K562 (cell line): ENCODE measurements at regions of chr1 and their contacts with region 1.

Region 1: GRCh38 chr1:167936068-167936929 is at the start of gene DCAF6:
- DNase-seq: peak; percentile 98 to 99 (median 98)
- ATAC-seq: peak; percentile 76
- H3K4me3 ChIP-seq: peak within 1 kb of the TSS; percentile 81
- H3K27ac ChIP-seq: peak within 1 kb of the TSS; percentile 98
- H3K4me1 ChIP-seq: peaks cover 8 to 15% of the 10 kb centered on the region in 2 experiments; a peak in 4 of 5 replicates
- H3K27me3 ChIP-seq: no peaks in the 10 kb centered on the region
- CTCF ChIP-seq: no peak; a peak in 1 of 6 replicates
- EP300 ChIP-seq: peak; percentile 27
- POLR2A ChIP-seq: peak; percentile 89
- RAD21 ChIP-seq: no peak
- polyA plus RNA-seq, gene DCAF6: 19.1 to 24.5 TPM

Region 2: GRCh38 chr1:167553136-167554027 is 382.9 kb before region 1 on chr1 and contains the start of gene CREG1:
- CTCF ChIA-PET with region 1: no interaction called
- POLR2A ChIA-PET with region 1: interaction called, 3 read pairs
- in situ Hi-C with region 1: no loop called
- intact Hi-C with region 1: loop called (anchors 5 kb)
- DNase-seq: peak; percentile 98 to 99 (median 98)
- ATAC-seq: peak; percentile 93
- H3K4me3 ChIP-seq: peak within 1 kb of the TSS; percentile 73
- H3K27ac ChIP-seq: peak within 1 kb of the TSS; percentile 70
- H3K4me1 ChIP-seq: peaks cover 23 to 45% of the 10 kb centered on the region in 2 experiments
- H3K27me3 ChIP-seq: no peaks in the 10 kb centered on the region
- CTCF ChIP-seq: peak in 2 of 3 experiments; percentile 24 to 41; a peak in 2 of 6 replicates
- EP300 ChIP-seq: 0 out of 2 replicates have a peak, but pooled peaks have one; percentile 9
- POLR2A ChIP-seq: peak; percentile 82
- RAD21 ChIP-seq: peak in 1 of 2 experiments; percentile 12; a peak in 1 of 4 replicates
- polyA plus RNA-seq, gene CREG1: 45.7 to 58.2 TPM

Region 3: DNA sequence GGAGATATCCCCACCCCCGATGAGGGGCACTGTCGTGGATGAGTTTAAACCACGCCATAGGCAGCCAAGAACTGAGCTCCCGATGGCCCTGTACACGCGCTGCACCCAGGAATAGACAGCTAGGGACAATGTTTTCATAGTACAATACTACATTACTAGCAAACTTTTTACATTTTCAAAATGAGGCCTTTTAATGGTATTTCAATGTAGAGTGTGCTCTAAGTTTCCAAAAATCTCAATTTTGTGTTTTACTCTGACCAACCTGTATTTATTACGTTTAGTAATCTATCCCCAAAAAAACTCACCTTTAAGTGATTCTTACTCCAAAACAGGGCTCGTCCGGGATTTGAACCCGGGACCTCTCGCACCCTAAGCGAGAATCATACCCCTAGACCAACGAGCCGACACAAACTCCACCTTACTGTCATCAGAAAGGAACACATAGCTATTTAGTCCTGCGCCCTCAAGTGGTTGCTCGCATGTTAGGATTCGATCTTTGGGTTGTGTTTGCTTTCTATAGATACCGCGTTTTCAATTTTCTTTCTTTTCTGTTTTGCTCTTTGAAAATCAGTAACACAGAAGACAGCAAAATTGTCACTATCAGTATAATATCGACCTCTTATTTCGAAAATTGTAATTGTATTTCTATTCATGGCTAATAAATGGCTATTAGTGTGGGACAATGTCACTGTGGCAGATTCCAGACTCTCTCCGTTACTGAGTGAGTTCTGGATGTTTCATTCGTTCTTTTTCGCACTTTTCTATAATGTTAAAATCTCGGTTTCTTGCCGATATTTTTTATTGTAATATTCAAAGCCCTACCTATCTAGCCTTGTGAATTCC is 220.9 kb before region 1 on chr1:
- CTCF ChIA-PET with region 1: no interaction called
- POLR2A ChIA-PET with region 1: interaction called, 19 read pairs
- in situ Hi-C with region 1: no loop called
- intact Hi-C with region 1: loop called (anchors 2 kb)
- DNase-seq: peak; percentile 75 to 94 (median 78)
- ATAC-seq: peak; percentile 65
- H3K4me3 ChIP-seq: peak overlapping the region; percentile 66
- H3K27ac ChIP-seq: peak overlapping the region; percentile 99
- H3K4me1 ChIP-seq: peaks cover 21 to 22% of the 10 kb centered on the region in 2 experiments
- H3K27me3 ChIP-seq: no peaks in the 10 kb centered on the region
- CTCF ChIP-seq: peak; percentile 87 to 98 (median 97)
- EP300 ChIP-seq: peak; percentile 86
- POLR2A ChIP-seq: no peak
- RAD21 ChIP-seq: peak; percentile 48 to 60

Region 4: DNA sequence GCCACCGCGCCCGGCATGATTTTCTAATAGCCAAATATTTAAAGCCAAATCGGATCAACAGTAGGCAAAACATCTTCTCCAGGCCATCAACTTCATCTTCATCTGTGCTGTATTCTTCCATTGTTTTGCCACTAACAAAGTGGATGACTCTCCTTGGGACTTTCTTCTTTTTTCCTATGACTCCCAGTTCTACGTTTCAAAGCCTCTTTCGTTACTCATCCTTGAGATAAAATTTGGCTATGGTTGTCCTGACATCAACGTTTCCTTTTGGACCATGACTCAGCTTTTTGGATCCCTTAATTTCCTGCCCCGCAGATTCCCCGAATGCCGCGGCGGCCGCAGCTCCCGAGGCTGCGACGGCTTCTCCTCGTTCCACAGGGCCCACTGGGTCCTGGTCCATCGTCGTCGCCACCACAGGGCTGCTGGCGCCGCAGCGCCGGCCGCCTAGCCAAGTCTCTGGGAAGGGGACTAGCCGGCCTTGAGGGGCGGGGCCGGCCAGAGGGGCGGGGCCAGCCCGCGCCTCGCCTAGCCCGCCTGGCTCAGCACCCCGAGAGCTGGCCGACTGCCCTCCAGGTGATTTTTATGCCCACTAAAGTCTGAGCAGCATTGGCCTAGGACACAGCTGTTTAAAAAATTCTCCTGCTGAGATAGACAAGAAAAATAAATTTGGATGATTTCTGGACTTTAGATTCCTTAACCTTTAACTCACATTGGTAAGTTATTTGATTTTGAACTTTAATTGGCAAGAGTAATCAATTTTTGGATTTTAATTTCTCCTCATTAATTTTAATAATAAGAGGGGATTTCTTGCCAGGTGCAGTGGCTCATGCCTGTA is 116.2 kb before region 1 on chr1:
- CTCF ChIA-PET with region 1: no interaction called
- POLR2A ChIA-PET with region 1: no interaction called
- in situ Hi-C with region 1: no loop called
- intact Hi-C with region 1: loop called (anchors 5 kb)
- DNase-seq: peak; percentile 90 to 94 (median 92)
- ATAC-seq: peak; percentile 94
- H3K4me3 ChIP-seq: peak overlapping the region; percentile 38
- H3K27ac ChIP-seq: peak overlapping the region; percentile 71
- H3K4me1 ChIP-seq: peaks cover 22 to 41% of the 10 kb centered on the region in 2 experiments
- H3K27me3 ChIP-seq: no peaks in the 10 kb centered on the region
- CTCF ChIP-seq: no peak
- EP300 ChIP-seq: peak; percentile 42; the same call in 1 of the 2 replicates
- POLR2A ChIP-seq: peak; percentile 74
- RAD21 ChIP-seq: peak; percentile 25 to 36; a peak in 3 of 4 replicates

Region 5: DNA sequence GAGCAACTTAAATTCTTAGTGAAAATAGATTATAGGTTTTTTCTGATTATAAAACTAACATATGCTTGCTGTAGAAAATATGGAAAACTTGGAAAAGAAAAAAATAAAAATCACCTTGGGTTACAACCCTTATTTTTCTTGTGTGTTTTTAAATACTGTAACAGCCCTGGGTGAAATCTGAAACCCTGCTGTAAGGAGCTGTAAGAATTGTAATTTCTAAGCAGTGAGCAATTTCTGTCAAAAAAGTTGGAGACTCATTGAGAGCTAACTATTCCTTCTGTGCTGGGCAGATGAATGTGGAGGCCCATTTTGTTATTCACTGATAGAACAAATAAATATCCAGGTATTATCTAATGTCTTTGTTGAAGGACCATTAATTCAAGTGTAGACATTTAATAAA is 65.0 kb before region 1 on chr1:
- CTCF ChIA-PET with region 1: no interaction called
- POLR2A ChIA-PET with region 1: interaction called, 10 read pairs
- in situ Hi-C with region 1: no loop called
- intact Hi-C with region 1: loop called (anchors 2 kb)
- DNase-seq: no peak
- ATAC-seq: no peak
- H3K4me3 ChIP-seq: no peak overlapping the region
- H3K27ac ChIP-seq: no peak overlapping the region
- H3K4me1 ChIP-seq: peaks cover 13 to 21% of the 10 kb centered on the region in 2 experiments
- H3K27me3 ChIP-seq: no peaks in the 10 kb centered on the region
- CTCF ChIP-seq: no peak
- EP300 ChIP-seq: no peak
- POLR2A ChIP-seq: no peak
- RAD21 ChIP-seq: no peak

Region 6: GRCh38 chr1:167984886-167985489 is 48.7 kb after region 1 on chr1:
- CTCF ChIA-PET with region 1: no interaction called
- POLR2A ChIA-PET with region 1: interaction called, 3 read pairs
- in situ Hi-C with region 1: no loop called
- intact Hi-C with region 1: loop called (anchors 1 kb)
- DNase-seq: peak in 3 of 4 experiments; percentile 22 to 92 (median 32)
- ATAC-seq: peak; percentile 94
- H3K4me3 ChIP-seq: no peak overlapping the region
- H3K27ac ChIP-seq: peak overlapping the region; percentile 75
- H3K4me1 ChIP-seq: peaks cover 0 to 23% of the 10 kb centered on the region in 2 experiments; a peak in 3 of 5 replicates
- H3K27me3 ChIP-seq: no peaks in the 10 kb centered on the region
- CTCF ChIP-seq: no peak
- EP300 ChIP-seq: peak; percentile 91
- POLR2A ChIP-seq: peak; percentile 66
- RAD21 ChIP-seq: peak in 1 of 2 experiments; percentile 15; a peak in 1 of 4 replicates

Region 7: GRCh38 chr1:168082008-168082876 is 145.9 kb after region 1 on chr1:
- CTCF ChIA-PET with region 1: no interaction called
- POLR2A ChIA-PET with region 1: interaction called, 8 read pairs
- in situ Hi-C with region 1: no loop called
- intact Hi-C with region 1: loop called (anchors 5 kb)
- DNase-seq: peak; percentile 78 to 87 (median 81)
- ATAC-seq: peak; percentile 92
- H3K4me3 ChIP-seq: no peak overlapping the region
- H3K27ac ChIP-seq: no peak overlapping the region; the same call in 2 of the 3 replicates
- H3K4me1 ChIP-seq: peaks cover 8 to 9% of the 10 kb centered on the region in 2 experiments; a peak in 4 of 5 replicates
- H3K27me3 ChIP-seq: no peaks in the 10 kb centered on the region
- CTCF ChIP-seq: peak; percentile 90 to 98 (median 96)
- EP300 ChIP-seq: no peak
- POLR2A ChIP-seq: no peak
- RAD21 ChIP-seq: peak; percentile 62 to 89

Region 8: GRCh38 chr1:168202941-168203654 is 266.8 kb after region 1 on chr1:
- CTCF ChIA-PET with region 1: no interaction called
- POLR2A ChIA-PET with region 1: no interaction called
- in situ Hi-C with region 1: no loop called
- intact Hi-C with region 1: no loop called
- DNase-seq: no peak
- ATAC-seq: no peak; the same call in 2 of the 3 replicates
- H3K4me3 ChIP-seq: no peak overlapping the region
- H3K27ac ChIP-seq: no peak overlapping the region
- H3K4me1 ChIP-seq: no peaks in the 10 kb centered on the region
- H3K27me3 ChIP-seq: no peaks in the 10 kb centered on the region
- CTCF ChIP-seq: no peak
- EP300 ChIP-seq: no peak
- POLR2A ChIP-seq: no peak
- RAD21 ChIP-seq: no peak